Left ventricle myocardium superior (tissue), 1 donor: ENCODE measurements at regions of chr2 and their contacts with region 1.

Region 1: DNA sequence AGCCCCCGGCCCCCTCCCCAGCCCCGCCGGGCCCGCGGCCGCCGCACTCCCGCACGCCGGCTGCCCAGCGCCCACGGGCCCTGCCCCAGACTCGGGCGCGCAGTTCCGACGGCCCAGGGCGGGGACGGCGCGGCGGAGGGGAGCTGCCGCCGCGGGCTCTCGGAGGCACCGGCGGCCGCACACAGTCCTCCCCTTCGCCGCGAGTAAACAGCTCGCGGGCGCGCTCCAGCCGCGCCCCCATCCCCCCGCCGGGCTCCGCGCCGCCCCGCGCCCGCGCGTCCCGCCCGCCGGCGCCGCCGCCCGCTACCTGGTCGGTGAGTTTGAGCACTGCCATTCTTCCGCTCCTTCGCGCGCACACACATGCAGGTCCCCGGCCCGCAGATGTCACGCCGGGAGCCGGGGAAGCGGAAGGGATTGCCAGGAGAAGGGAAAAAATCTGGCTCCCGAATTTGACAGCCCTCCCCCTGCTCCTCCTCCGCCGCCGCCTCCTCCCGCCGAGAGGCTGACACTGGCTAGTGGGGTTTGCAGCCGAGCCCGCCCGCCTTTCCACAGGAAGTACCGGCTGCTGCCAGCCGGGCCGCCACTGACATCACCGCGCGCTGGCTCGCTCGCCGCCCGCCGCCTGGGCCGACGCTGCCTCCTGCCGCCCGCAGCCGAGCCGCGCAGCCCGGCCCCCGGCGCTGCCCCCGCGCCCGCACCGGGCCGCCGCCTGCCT is at the start of gene ANKRD44:
- DNase-seq: peak; percentile 96
- ATAC-seq: peak; percentile 98
- total RNA-seq, gene ANKRD44: 6.9 TPM

Region 2: GRCh38 chr2:197130318-197130717 is 180.1 kb before region 1 on chr2:
- intact Hi-C with region 1: loop called (anchors 10 kb)
- DNase-seq: no peak
- ATAC-seq: no peak

Region 3: GRCh38 chr2:197191177-197191939 is 119.1 kb before region 1 on chr2:
- intact Hi-C with region 1: loop called (anchors 5 kb)
- DNase-seq: no peak
- ATAC-seq: peak; percentile 31

Region 4: GRCh38 chr2:197255543-197255942 is 54.9 kb before region 1 on chr2:
- intact Hi-C with region 1: no loop called
- DNase-seq: peak; percentile 75
- ATAC-seq: peak; percentile 96